Caco-2 (cell line): ENCODE measurements at regions of chr12 and their contacts with region 1.

Region 1: GRCh38 chr12:76031537-76032073 is at the start of gene PHLDA1:
- DNase-seq: peak; percentile 97 to 98
- H3K4me3 ChIP-seq: peak within 1 kb of the TSS; percentile 97
- H3K4me3 Mint-ChIP-seq: peak within 1 kb of the TSS; percentile 86
- H3K27ac Mint-ChIP-seq: peak within 1 kb of the TSS; percentile 90
- H3K4me1 ChIP-seq: peaks cover 19% of the 10 kb centered on the region
- H3K4me1 Mint-ChIP-seq: peaks cover 25% of the 10 kb centered on the region
- H3K27me3 ChIP-seq: no peaks in the 10 kb centered on the region
- H3K27me3 Mint-ChIP-seq: no peaks in the 10 kb centered on the region
- CTCF ChIP-seq: peak; percentile 63 to 85
- total RNA-seq, gene PHLDA1: 46.2 and 47.2 TPM in 2 replicates

Region 2: DNA sequence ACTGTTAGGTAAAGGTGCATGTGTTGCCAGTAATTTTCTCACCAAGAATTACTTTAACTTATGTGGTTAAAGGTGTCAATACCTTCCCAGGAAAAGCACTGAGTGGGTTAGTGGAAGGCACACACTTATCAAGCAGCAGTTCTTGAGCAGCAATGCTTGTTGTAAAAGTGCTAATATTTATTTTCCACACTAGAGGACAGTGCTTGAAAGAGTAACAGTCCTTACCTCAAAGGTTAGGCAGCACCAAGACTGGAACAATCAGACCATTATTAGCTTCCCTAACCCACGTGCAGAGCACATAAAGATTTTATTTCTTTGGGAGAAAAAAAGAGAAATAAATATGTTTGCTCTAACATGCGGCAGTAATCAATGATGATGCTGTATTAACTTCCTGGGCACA is 471.4 kb before region 1 on chr12:
- CTCF ChIA-PET with region 1: interaction called, 3 read pairs
- POLR2A ChIA-PET with region 1: no interaction called
- intact Hi-C with region 1: loop called (anchors 1 kb)
- DNase-seq: no peak
- H3K4me3 ChIP-seq: no peak overlapping the region
- H3K4me3 Mint-ChIP-seq: no peak overlapping the region
- H3K27ac Mint-ChIP-seq: no peak overlapping the region
- H3K4me1 ChIP-seq: no peaks in the 10 kb centered on the region
- H3K4me1 Mint-ChIP-seq: peaks cover 5% of the 10 kb centered on the region
- H3K27me3 ChIP-seq: no peaks in the 10 kb centered on the region
- H3K27me3 Mint-ChIP-seq: no peaks in the 10 kb centered on the region
- CTCF ChIP-seq: peak in 1 of 2 experiments; percentile 50

Region 3: DNA sequence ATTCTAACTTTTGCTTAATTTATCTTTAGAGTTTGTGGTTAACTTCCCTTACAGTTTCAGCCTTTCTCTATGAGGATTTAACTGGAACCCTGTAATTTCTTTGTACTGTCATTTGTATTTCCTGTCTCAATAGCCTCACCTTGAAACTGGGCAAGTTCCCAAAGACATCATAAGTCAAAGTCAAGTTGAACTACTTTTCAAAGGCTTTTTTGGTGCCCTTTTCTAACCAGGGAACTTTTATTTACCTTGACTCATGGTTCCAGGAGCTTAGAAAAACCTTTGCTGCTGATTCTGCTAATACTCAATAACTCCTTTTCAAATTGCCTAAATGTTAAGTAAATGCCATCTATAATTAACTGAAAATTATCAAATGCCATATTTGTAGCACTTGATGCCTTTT is 319.4 kb before region 1 on chr12:
- CTCF ChIA-PET with region 1: no interaction called
- POLR2A ChIA-PET with region 1: interaction called, 4 read pairs
- intact Hi-C with region 1: loop called (anchors 5 kb)
- DNase-seq: no peak
- H3K4me3 ChIP-seq: no peak overlapping the region
- H3K4me3 Mint-ChIP-seq: no peak overlapping the region
- H3K27ac Mint-ChIP-seq: no peak overlapping the region
- H3K4me1 ChIP-seq: peaks cover 28% of the 10 kb centered on the region
- H3K4me1 Mint-ChIP-seq: peaks cover 33% of the 10 kb centered on the region
- H3K27me3 ChIP-seq: no peaks in the 10 kb centered on the region
- H3K27me3 Mint-ChIP-seq: no peaks in the 10 kb centered on the region
- CTCF ChIP-seq: no peak

Region 4: DNA sequence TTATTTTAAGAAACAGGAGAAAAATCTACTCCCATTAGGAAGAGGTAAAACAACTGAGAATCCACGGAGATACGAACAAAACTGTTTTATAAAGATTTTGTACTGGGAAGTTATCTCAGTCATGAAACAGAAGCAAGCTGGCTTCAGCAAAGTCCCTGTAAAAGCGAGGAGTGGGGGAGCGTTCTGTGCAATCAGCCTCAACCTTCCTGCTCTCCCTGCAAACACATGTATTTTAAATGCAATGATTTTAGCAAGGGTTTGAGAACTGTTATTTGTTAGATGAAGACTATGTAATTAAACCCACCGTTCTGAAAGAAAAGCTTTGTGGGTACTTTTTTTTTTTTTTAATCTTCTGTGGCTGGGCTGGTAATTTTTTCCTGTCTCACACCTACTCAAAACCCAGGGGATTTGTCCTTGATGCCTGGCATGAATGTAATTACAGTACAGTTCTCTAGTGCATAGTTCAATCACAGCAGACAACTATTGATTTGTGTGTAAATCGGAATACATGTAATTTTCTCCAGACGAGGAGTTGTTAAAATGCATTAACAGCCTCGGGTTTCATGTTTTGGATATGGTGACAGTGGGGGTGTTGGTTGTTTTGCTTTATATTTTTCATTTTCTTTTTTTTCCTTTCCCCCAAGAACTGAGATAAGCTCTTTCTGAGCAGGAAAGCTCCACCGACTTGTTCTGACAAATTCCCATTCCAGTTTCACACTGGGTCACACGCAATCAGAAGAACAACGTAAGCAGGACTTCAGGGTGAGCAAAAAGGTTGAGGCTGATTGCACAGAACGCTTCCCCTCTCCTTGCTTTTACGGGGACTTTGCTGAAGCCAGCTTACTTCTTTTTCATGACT is 153.6 kb before region 1 on chr12:
- CTCF ChIA-PET with region 1: no interaction called
- POLR2A ChIA-PET with region 1: no interaction called
- intact Hi-C with region 1: loop called (anchors 5 kb)
- DNase-seq: no peak
- H3K4me3 ChIP-seq: no peak overlapping the region
- H3K4me3 Mint-ChIP-seq: no peak overlapping the region
- H3K27ac Mint-ChIP-seq: peak overlapping the region; percentile 79
- H3K4me1 ChIP-seq: peaks cover 38% of the 10 kb centered on the region
- H3K4me1 Mint-ChIP-seq: peaks cover 31% of the 10 kb centered on the region
- H3K27me3 ChIP-seq: no peaks in the 10 kb centered on the region
- H3K27me3 Mint-ChIP-seq: no peaks in the 10 kb centered on the region
- CTCF ChIP-seq: no peak

Region 5: DNA sequence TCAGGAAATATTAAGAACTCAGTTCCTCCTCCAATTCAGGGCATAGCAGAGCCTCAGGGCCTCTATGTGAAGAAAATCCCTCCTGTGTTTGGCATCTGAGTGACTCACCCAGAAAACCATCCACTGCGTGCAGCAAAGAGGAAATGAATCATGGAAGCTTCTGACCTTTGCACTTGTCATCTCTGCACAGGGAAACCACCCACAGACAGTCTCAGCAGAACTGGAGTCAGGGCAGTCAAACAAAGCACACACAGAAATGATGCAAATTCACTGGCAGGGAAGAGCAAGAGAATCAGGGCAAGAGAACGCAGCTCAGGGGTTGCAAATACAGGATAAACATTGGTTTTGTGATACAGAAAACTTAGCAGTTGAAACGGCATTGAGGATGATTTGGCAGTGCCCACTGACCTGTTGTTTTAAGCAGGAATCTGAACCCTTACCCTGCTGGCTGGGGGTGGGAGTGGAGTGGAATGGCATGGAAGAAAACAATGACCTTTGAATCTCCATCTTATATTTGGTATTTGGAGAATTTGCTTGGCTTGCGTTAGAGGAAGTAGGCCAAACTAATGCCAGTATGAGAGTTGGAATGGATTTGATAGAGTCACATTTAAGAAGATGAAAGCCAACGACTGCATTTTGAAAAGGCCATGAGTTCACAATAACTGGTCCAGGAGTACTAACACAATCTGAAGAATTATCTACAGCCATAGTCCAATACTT is 53.5 kb before region 1 on chr12:
- CTCF ChIA-PET with region 1: interaction called, 3 read pairs
- POLR2A ChIA-PET with region 1: no interaction called
- intact Hi-C with region 1: loop called (anchors 1 kb)
- DNase-seq: peak; percentile 91 to 94
- H3K4me3 ChIP-seq: no peak overlapping the region
- H3K4me3 Mint-ChIP-seq: peak overlapping the region; percentile 63
- H3K27ac Mint-ChIP-seq: peak overlapping the region; percentile 92
- H3K4me1 ChIP-seq: peaks cover 68% of the 10 kb centered on the region
- H3K4me1 Mint-ChIP-seq: peaks cover 46% of the 10 kb centered on the region
- H3K27me3 ChIP-seq: no peaks in the 10 kb centered on the region
- H3K27me3 Mint-ChIP-seq: no peaks in the 10 kb centered on the region
- CTCF ChIP-seq: no peak

Region 6: DNA sequence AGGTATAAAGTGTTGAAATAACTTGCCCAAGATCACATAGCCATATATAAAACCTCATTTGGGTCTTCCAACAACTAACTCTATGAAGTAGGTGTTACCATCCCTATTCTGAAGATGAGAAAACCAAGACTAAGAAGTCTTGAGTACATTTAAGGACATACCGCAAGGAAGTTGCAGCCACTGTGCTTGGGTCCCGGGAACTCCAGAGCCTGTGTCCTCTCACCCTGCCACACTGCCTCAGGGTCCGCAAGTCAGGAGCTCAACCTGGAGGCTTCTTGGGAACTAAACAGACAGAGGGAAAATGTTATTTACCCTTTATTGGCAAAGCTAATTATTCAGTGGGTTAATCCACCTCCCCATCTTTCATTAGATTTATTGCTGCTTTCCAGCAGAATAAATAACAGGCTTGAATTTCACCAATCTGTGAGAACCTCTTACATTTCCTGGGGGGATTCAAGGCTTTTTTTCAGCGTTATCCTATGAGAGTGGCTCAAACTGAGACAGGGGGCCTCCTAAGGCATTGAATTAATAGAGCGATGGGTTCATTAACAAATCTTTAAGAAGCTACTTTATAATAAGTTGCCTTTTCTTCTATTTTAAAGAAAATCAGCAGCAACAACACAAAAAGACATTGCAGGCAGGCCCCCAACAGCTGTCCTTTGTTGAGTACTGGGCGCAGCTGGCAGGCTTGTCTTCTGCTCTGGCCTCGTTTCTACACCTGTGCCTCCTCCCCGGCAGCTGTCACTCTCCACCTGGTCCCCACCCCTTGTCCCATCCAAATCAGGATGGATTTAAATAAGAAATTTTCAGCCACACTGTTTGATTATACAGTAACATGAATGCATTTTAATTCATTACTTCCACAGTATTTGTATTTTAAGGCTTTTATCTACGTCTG is 25.3 kb before region 1 on chr12:
- CTCF ChIA-PET with region 1: no interaction called
- POLR2A ChIA-PET with region 1: no interaction called
- intact Hi-C with region 1: no loop called
- DNase-seq: no peak
- H3K4me3 ChIP-seq: no peak overlapping the region
- H3K4me3 Mint-ChIP-seq: no peak overlapping the region
- H3K27ac Mint-ChIP-seq: no peak overlapping the region
- H3K4me1 ChIP-seq: peaks cover 22% of the 10 kb centered on the region
- H3K4me1 Mint-ChIP-seq: peaks cover 24% of the 10 kb centered on the region
- H3K27me3 ChIP-seq: no peaks in the 10 kb centered on the region
- H3K27me3 Mint-ChIP-seq: no peaks in the 10 kb centered on the region
- CTCF ChIP-seq: no peak